B cell (primary cell): ENCODE measurements at regions of chr5 and their contacts with region 1.

Region 1: GRCh38 chr5:64784451-64785025 is 15.8 kb downstream of the CWC27 start:
- DNase-seq: peak; percentile 79
- ATAC-seq: peak; percentile 60
- H3K4me3 ChIP-seq: no peak overlapping the region
- H3K4me3 Mint-ChIP-seq: no peak overlapping the region
- H3K27ac ChIP-seq: no peak overlapping the region
- H3K27ac Mint-ChIP-seq: no peak overlapping the region
- H3K4me1 ChIP-seq: no peaks in the 10 kb centered on the region
- H3K4me1 Mint-ChIP-seq: no peaks in the 10 kb centered on the region
- H3K27me3 ChIP-seq: no peaks in the 10 kb centered on the region
- H3K27me3 Mint-ChIP-seq: no peaks in the 10 kb centered on the region
- CTCF ChIP-seq: peak; percentile 98

Region 2: GRCh38 chr5:64074533-64074932 is 710.0 kb before region 1 on chr5:
- CTCF ChIA-PET with region 1: no interaction called
- POLR2A ChIA-PET with region 1: no interaction called
- intact Hi-C with region 1: loop called (anchors 5 kb)
- DNase-seq: no peak
- ATAC-seq: no peak
- H3K4me3 ChIP-seq: no peak overlapping the region
- H3K4me3 Mint-ChIP-seq: no peak overlapping the region
- H3K27ac ChIP-seq: no peak overlapping the region
- H3K27ac Mint-ChIP-seq: no peak overlapping the region
- H3K4me1 ChIP-seq: no peaks in the 10 kb centered on the region
- H3K4me1 Mint-ChIP-seq: no peaks in the 10 kb centered on the region
- H3K27me3 ChIP-seq: no peaks in the 10 kb centered on the region
- H3K27me3 Mint-ChIP-seq: no peaks in the 10 kb centered on the region
- CTCF ChIP-seq: peak; percentile 54

Region 3: DNA sequence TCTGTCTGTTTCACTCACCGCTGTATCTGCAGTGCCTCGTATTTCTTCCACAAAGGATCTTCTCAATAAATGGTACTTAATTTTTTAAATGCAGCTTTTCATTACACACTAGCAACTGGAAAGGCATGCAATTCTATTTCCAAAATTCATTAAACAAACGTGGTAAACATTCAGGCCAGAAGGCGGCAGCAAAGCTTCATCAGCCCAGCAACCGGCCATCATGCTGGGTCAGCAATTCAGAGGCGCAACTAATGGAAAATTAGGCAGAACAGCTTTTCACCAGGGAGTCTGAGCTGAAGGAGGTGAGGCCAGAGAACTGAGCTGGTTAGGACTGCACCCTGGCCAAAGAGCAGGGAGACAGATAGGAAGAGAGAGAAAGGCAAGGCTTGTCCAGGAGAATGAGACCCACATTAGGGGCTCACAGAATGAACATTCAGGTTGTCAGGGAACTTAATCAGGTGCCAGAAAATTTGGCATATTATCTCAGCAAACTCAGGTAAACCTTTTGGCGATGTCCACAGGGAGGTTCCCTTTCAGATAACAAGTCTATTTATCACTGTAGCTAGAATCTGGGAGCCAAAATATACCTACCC is 636.6 kb before region 1 on chr5:
- CTCF ChIA-PET with region 1: no interaction called
- POLR2A ChIA-PET with region 1: no interaction called
- intact Hi-C with region 1: loop called (anchors 5 kb)
- DNase-seq: no peak
- ATAC-seq: no peak
- H3K4me3 ChIP-seq: no peak overlapping the region
- H3K4me3 Mint-ChIP-seq: no peak overlapping the region
- H3K27ac ChIP-seq: no peak overlapping the region
- H3K27ac Mint-ChIP-seq: no peak overlapping the region
- H3K4me1 ChIP-seq: no peaks in the 10 kb centered on the region
- H3K4me1 Mint-ChIP-seq: no peaks in the 10 kb centered on the region
- H3K27me3 ChIP-seq: no peaks in the 10 kb centered on the region
- H3K27me3 Mint-ChIP-seq: no peaks in the 10 kb centered on the region
- CTCF ChIP-seq: peak; percentile 17

Region 4: GRCh38 chr5:64634997-64635686 is 149.4 kb before region 1 on chr5:
- CTCF ChIA-PET with region 1: interaction called, 71 read pairs
- POLR2A ChIA-PET with region 1: no interaction called
- intact Hi-C with region 1: no loop called
- DNase-seq: peak; percentile 50
- ATAC-seq: no peak
- H3K4me3 ChIP-seq: no peak overlapping the region
- H3K4me3 Mint-ChIP-seq: no peak overlapping the region
- H3K27ac ChIP-seq: no peak overlapping the region
- H3K27ac Mint-ChIP-seq: no peak overlapping the region
- H3K4me1 ChIP-seq: no peaks in the 10 kb centered on the region
- H3K4me1 Mint-ChIP-seq: no peaks in the 10 kb centered on the region
- H3K27me3 ChIP-seq: peaks cover 0 to 8% (median 3%) of the 10 kb centered on the region in 4 experiments
- H3K27me3 Mint-ChIP-seq: peaks cover 32% of the 10 kb centered on the region
- CTCF ChIP-seq: peak; percentile 96

Region 5: DNA sequence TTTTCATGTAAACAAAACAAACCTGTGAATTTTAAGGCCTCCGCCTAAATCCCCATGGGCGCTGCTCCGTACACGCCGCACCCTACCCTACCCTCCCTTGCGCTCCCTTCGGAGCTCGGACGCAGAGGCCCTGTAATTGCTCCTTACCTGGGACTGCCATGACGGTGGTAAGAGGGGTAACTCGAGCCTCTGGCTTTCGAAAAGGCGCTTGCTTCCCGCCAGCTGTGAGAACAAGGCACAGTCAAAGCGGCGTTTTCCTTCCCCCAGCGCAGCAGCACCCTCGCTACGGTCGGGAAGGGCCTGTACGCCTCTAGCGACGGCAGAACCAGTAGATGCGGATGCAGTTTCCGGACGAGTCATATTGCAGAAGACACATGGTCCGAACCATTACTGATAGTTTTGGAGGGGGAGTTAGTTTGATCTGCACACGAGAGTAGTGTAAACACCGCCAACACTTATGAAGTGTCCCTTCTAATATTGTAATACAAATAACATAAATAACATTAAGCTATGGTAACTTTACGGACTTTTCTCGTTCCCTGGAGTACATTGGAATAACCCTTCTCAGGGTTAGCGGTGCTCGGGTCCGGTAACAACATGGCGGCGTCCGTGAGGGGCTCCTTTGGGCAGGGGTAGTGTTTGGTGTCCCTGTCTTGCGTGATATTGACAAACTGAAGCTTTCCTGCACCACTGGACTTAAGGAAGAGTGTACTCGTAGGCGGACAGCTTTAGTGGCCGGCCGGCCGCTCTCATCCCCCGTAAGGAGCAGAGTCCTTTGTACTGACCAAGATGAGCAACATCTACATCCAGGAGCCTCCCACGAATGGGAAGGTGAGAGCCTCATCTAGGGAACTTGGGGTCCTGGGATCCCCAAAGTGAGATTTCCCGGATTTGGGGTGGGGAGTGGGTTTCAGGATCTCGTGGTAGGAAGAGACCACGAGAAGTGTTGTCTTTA is 15.9 kb before region 1 on chr5 and contains the starts of genes CWC27 and SREK1IP1:
- CTCF ChIA-PET with region 1: interaction called, 14 read pairs
- POLR2A ChIA-PET with region 1: no interaction called
- intact Hi-C with region 1: loop called (anchors 2 kb)
- DNase-seq: peak; percentile 92
- ATAC-seq: peak; percentile 94
- H3K4me3 ChIP-seq: peak within 1 kb of the TSS; percentile 81 to 99 (median 96)
- H3K4me3 Mint-ChIP-seq: peak within 1 kb of the TSS; percentile 99
- H3K27ac ChIP-seq: peak within 1 kb of the TSS; percentile 73 to 84
- H3K27ac Mint-ChIP-seq: peak within 1 kb of the TSS; percentile 96
- H3K4me1 ChIP-seq: peaks cover 30 to 37% of the 10 kb centered on the region in 2 donors
- H3K4me1 Mint-ChIP-seq: peaks cover 55% of the 10 kb centered on the region
- H3K27me3 ChIP-seq: no peaks in the 10 kb centered on the region
- H3K27me3 Mint-ChIP-seq: no peaks in the 10 kb centered on the region
- CTCF ChIP-seq: no peak
- total RNA-seq, gene CWC27: 27.5 and 30.5 TPM in 2 replicates
- total RNA-seq, gene SREK1IP1: 21.0 and 25.5 TPM in 2 replicates

Region 6: GRCh38 chr5:64895748-64896147 is 111.2 kb after region 1 on chr5:
- CTCF ChIA-PET with region 1: no interaction called
- POLR2A ChIA-PET with region 1: no interaction called
- intact Hi-C with region 1: no loop called
- DNase-seq: no peak
- ATAC-seq: no peak
- H3K4me3 ChIP-seq: no peak overlapping the region
- H3K4me3 Mint-ChIP-seq: no peak overlapping the region
- H3K27ac ChIP-seq: no peak overlapping the region
- H3K27ac Mint-ChIP-seq: no peak overlapping the region
- H3K4me1 ChIP-seq: no peaks in the 10 kb centered on the region
- H3K4me1 Mint-ChIP-seq: no peaks in the 10 kb centered on the region
- H3K27me3 ChIP-seq: no peaks in the 10 kb centered on the region
- H3K27me3 Mint-ChIP-seq: no peaks in the 10 kb centered on the region
- CTCF ChIP-seq: no peak